ENCODE measurements at regions of chr21 and their contacts with region 1.

Region 1: DNA sequence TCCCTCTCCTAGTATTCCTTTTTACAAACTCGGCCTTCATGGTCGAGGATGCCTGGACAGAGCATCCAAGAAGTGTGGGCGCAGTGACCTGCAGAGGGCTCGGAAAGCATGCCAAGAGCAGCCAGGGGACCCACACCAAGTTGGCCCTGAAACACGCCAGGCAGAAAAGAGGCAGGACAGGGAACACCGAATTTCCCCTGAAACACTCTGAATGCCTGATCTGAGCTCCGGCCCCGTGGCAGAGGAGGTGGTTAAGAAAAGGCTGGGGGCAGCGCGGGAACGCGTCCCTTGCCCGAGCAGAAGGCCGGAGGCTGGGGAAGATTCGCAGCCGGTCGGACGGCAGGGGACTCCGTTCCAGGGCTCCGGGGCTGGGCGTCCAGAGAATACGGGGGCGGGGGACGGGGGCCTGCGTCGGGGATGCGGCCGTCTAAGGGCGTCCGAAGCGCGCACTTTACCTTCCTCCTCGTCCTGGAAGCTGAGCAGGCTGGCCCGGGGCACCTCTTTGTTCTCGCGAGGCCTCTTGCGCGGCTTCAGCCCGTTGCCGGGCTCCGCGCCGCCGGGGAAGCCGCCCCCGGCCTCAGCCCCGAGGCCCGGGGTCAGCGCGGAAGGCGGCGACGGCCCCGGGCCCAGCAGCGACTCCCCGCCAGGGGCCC is 558 bp downstream of the PAXBP1 start:
- DNase-seq: peak; percentile 66 to 84 (median 81)
- ATAC-seq: peak; percentile 65 to 71
- H3K4me3 ChIP-seq: peak overlapping the region; percentile 82
- H3K27ac ChIP-seq: peak overlapping the region; percentile 86
- H3K4me1 ChIP-seq: peaks cover 2% of the 10 kb centered on the region
- H3K27me3 ChIP-seq: no peaks in the 10 kb centered on the region

Region 2: GRCh38 chr21:32554832-32555436 is 216.1 kb before region 1 on chr21:
- intact Hi-C with region 1: no loop called
- DNase-seq: no peak
- ATAC-seq: no peak
- H3K4me3 ChIP-seq: no peak overlapping the region
- H3K27ac ChIP-seq: no peak overlapping the region
- H3K4me1 ChIP-seq: no peaks in the 10 kb centered on the region
- H3K27me3 ChIP-seq: no peaks in the 10 kb centered on the region

Region 3: GRCh38 chr21:32626621-32627196 is 144.3 kb before region 1 on chr21:
- intact Hi-C with region 1: no loop called
- DNase-seq: no peak
- ATAC-seq: no peak
- H3K4me3 ChIP-seq: no peak overlapping the region
- H3K27ac ChIP-seq: no peak overlapping the region
- H3K4me1 ChIP-seq: no peaks in the 10 kb centered on the region
- H3K27me3 ChIP-seq: no peaks in the 10 kb centered on the region

Region 4: DNA sequence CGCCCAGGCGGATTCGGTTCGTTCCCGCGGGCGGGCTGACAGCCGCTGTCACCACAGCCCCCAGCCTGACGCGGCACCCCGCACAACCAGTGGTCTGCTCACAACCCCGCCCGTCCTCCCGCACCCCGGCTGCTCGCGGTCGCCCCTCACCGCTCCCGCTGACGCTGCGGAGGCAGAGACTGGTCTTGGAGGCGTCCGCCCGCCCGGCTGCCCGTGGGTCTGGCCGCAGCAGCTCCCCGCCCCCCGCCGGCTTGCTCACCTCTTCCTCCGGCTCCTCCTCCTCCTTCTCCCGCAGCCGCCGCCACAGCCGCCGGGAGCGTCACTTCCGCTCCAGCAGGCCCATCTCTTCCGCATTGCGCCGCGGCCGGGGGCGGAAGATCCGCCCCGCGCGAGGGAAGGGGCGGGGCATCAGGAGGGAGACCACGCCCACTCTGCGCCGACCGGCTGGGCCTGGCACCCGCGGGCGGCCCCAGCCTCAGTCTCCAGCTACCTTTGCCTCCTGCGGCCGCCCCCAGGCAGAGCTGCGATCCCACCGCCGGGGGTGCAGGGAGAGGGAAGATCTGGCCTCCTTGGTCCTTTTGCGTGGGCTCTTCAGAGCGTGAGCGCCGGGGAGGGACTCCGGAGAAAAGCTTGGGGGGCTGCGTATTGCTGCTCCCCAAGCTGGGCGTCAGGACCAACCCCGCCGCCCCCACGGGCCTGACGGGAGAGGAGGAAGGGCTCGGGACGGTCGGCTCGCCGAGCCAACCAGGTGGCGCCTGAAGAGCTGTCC is 43.1 kb before region 1 on chr21 and contains the start of gene SYNJ1:
- intact Hi-C with region 1: loop called in 2 of 4 experiments (anchors 2 to 5 kb)
- DNase-seq: peak; percentile 97 to 99 (median 98)
- ATAC-seq: peak; percentile 99
- H3K4me3 ChIP-seq: peak within 1 kb of the TSS; percentile 81
- H3K27ac ChIP-seq: peak within 1 kb of the TSS; percentile 85
- H3K4me1 ChIP-seq: peaks cover 3% of the 10 kb centered on the region
- H3K27me3 ChIP-seq: no peaks in the 10 kb centered on the region
- total RNA-seq, gene SYNJ1: 13.4 to 16.9 (median 16.0) TPM

Measured in right cardiac atrium (tissue), 5 donors.